ENCODE measurements at regions of chr17 and their contacts with region 1.

Region 1: DNA sequence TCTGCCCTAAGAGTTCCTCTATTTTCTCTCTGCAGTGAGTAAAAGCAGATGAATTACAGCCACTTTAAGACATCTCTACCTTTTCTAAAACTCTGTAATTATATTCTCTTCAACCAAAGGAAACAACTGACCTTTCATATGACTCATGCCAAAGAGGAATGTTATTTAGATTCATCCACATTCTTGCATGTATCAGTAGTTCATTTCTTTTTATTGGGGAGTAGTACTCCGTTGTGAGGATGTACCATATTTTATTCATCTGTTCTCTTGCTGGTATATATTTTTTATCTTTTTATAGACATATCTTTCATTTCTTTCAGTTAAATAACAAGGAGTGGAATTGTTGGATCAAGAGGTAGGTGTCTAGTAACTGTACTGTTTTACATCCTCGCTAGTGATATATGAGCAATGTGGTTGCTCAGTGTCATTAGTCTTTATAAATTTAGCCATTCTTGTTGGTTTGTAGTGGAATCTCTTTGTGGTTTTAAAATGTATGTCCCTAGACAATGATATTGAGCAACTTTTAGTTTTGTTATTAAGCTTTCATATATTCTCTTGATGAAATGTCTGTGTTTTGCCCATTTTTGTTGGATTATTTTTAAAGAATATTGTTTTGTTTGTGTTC is 7.8 kb upstream of the MYH8 start:
- DNase-seq: no peak
- ATAC-seq: no peak
- H3K4me3 ChIP-seq: no peak overlapping the region
- H3K27ac ChIP-seq: no peak overlapping the region
- H3K4me1 ChIP-seq: no peaks in the 10 kb centered on the region
- H3K27me3 ChIP-seq: no peaks in the 10 kb centered on the region
- CTCF ChIP-seq: no peak
- POLR2A ChIP-seq: no peak

Region 2: GRCh38 chr17:10471853-10472252 is 42.3 kb after region 1 on chr17:
- intact Hi-C with region 1: no loop called
- DNase-seq: no peak
- ATAC-seq: no peak
- H3K4me3 ChIP-seq: no peak overlapping the region
- H3K27ac ChIP-seq: no peak overlapping the region
- H3K4me1 ChIP-seq: no peaks in the 10 kb centered on the region
- H3K27me3 ChIP-seq: no peaks in the 10 kb centered on the region
- CTCF ChIP-seq: no peak
- POLR2A ChIP-seq: no peak

Region 3: GRCh38 chr17:10499950-10500349 is 70.4 kb after region 1 on chr17:
- intact Hi-C with region 1: loop called in 1 of 10 experiments (anchors 10 kb)
- DNase-seq: no peak
- ATAC-seq: no peak
- H3K4me3 ChIP-seq: no peak overlapping the region
- H3K27ac ChIP-seq: no peak overlapping the region
- H3K4me1 ChIP-seq: no peaks in the 10 kb centered on the region
- H3K27me3 ChIP-seq: no peaks in the 10 kb centered on the region
- CTCF ChIP-seq: no peak
- POLR2A ChIP-seq: no peak